HCT116 (cell line): ENCODE measurements at regions of chr6 and their contacts with region 1.

Region 1: GRCh38 chr6:124738482-124738881 is 223.8 kb upstream of the RNF217 start:
- DNase-seq: no peak
- ATAC-seq: no peak
- H3K4me3 ChIP-seq: no peak overlapping the region
- H3K27ac ChIP-seq: no peak overlapping the region
- H3K4me1 ChIP-seq: no peaks in the 10 kb centered on the region
- H3K27me3 ChIP-seq: peaks cover 9% of the 10 kb centered on the region; the same call in 1 of the 2 replicates
- CTCF ChIP-seq: no peak
- POLR2A ChIP-seq: no peak
- RAD21 ChIP-seq: no peak

Region 2: GRCh38 chr6:124703541-124703940 is 34.9 kb before region 1 on chr6:
- CTCF ChIA-PET with region 1: no interaction called
- POLR2A ChIA-PET with region 1: no interaction called
- RAD21 ChIA-PET with region 1: no interaction called
- intact Hi-C with region 1: loop called (anchors 5 kb)
- DNase-seq: no peak
- ATAC-seq: no peak
- H3K4me3 ChIP-seq: no peak overlapping the region
- H3K27ac ChIP-seq: no peak overlapping the region
- H3K4me1 ChIP-seq: no peaks in the 10 kb centered on the region
- H3K27me3 ChIP-seq: no peaks in the 10 kb centered on the region; the same call in 1 of the 2 replicates
- CTCF ChIP-seq: no peak
- POLR2A ChIP-seq: no peak
- RAD21 ChIP-seq: no peak